ENCODE measurements at regions of chr6 and their contacts with region 1.

Region 1: GRCh38 chr6:106979427-106979884 is 4.9 kb upstream of the CD24 start:
- DNase-seq: peak; percentile 80 to 89
- H3K4me3 ChIP-seq: no peak overlapping the region
- H3K4me3 Mint-ChIP-seq: no peak overlapping the region
- H3K27ac Mint-ChIP-seq: no peak overlapping the region
- H3K4me1 ChIP-seq: peaks cover 11% of the 10 kb centered on the region; the same call in 1 of the 2 replicates
- H3K4me1 Mint-ChIP-seq: no peaks in the 10 kb centered on the region
- H3K27me3 ChIP-seq: no peaks in the 10 kb centered on the region
- H3K27me3 Mint-ChIP-seq: no peaks in the 10 kb centered on the region
- CTCF ChIP-seq: peak; percentile 95 to 98

Region 2: GRCh38 chr6:106444777-106445507 is 534.5 kb before region 1 on chr6:
- CTCF ChIA-PET with region 1: interaction called, 3 read pairs
- POLR2A ChIA-PET with region 1: no interaction called
- intact Hi-C with region 1: loop called (anchors 1 kb)
- DNase-seq: peak in 1 of 2 experiments; percentile 65
- H3K4me3 ChIP-seq: no peak overlapping the region
- H3K4me3 Mint-ChIP-seq: no peak overlapping the region
- H3K27ac Mint-ChIP-seq: no peak overlapping the region
- H3K4me1 ChIP-seq: peaks cover 8% of the 10 kb centered on the region
- H3K4me1 Mint-ChIP-seq: peaks cover 6% of the 10 kb centered on the region
- H3K27me3 ChIP-seq: no peaks in the 10 kb centered on the region; the same call in none of the 2 replicates
- H3K27me3 Mint-ChIP-seq: peaks cover 14% of the 10 kb centered on the region
- CTCF ChIP-seq: peak; percentile 64 to 65

Region 3: DNA sequence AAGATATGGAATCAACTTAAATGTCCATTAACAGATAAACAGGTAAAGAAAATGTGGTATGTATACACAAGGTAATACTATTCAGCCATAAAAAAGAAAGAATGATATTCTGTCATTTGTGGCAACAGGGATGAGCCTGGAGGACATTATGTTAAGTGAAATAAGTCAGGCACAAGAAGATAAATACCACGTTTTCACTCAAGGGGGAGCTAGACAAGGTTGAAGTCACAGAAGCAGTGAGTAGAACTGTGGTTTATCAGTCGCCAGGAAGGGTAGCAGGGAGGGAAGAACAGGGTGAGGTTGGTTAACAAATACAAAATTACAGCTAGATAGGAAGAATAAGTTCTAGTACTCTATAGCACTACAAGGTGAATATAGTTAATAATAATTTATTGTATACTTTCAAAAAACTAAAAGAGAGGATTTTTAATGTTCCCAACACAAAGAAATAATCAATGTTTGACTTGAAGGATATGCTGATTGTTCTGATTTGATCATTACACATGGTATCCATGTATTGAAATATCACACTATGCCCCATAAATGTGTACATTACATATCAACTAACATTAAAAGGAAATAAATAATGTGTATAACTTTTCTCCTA is 371.3 kb before region 1 on chr6:
- CTCF ChIA-PET with region 1: interaction called, 20 read pairs
- POLR2A ChIA-PET with region 1: no interaction called
- intact Hi-C with region 1: loop called (anchors 1 kb)
- DNase-seq: peak in 1 of 2 experiments; percentile 67
- H3K4me3 ChIP-seq: no peak overlapping the region
- H3K4me3 Mint-ChIP-seq: no peak overlapping the region
- H3K27ac Mint-ChIP-seq: no peak overlapping the region
- H3K4me1 ChIP-seq: no peaks in the 10 kb centered on the region
- H3K4me1 Mint-ChIP-seq: no peaks in the 10 kb centered on the region
- H3K27me3 ChIP-seq: no peaks in the 10 kb centered on the region
- H3K27me3 Mint-ChIP-seq: no peaks in the 10 kb centered on the region
- CTCF ChIP-seq: peak; percentile 54 to 56

Region 4: DNA sequence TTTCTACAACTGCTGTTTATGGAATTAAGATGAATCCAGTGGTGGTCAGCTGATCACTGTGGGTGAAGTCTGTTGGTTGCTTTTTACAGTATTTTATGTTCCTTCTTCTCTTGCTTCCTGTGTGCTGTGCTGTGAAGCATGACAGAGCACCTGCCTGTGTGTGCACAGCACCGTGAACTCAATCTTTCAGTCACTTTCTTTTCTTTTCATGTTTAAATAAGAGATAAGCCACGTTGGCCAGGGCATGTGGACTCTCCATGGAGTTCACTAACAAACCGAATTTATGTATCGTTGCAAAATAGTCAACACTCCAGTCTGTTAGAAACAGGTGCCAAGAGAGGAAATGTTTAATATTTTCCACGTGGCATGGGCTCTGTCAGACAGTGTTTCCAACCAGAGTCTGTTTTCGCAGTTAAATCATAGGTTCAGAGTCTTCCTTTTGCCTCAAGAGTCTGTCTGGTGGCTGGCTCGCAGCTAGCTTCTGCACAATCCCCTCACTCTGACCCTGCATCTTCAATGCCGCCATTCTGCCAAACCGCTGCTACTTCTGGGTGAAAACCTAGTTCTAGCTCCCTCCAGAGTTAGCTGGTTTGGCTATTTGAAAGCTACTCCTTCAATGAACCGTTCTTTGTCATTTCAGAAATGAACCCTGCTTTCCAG is 276.9 kb before region 1 on chr6:
- CTCF ChIA-PET with region 1: no interaction called
- POLR2A ChIA-PET with region 1: no interaction called
- intact Hi-C with region 1: loop called (anchors 5 kb)
- DNase-seq: peak; percentile 35 to 38
- H3K4me3 ChIP-seq: peak overlapping the region; percentile 8
- H3K4me3 Mint-ChIP-seq: peak overlapping the region; percentile 52
- H3K27ac Mint-ChIP-seq: no peak overlapping the region
- H3K4me1 ChIP-seq: peaks cover 15% of the 10 kb centered on the region
- H3K4me1 Mint-ChIP-seq: peaks cover 16% of the 10 kb centered on the region
- H3K27me3 ChIP-seq: no peaks in the 10 kb centered on the region
- H3K27me3 Mint-ChIP-seq: no peaks in the 10 kb centered on the region
- CTCF ChIP-seq: no peak

Region 5: GRCh38 chr6:106883808-106884262 is 95.6 kb before region 1 on chr6:
- CTCF ChIA-PET with region 1: interaction called, 5 read pairs
- POLR2A ChIA-PET with region 1: no interaction called
- intact Hi-C with region 1: loop called (anchors 1 kb)
- DNase-seq: no peak
- H3K4me3 ChIP-seq: no peak overlapping the region
- H3K4me3 Mint-ChIP-seq: no peak overlapping the region
- H3K27ac Mint-ChIP-seq: no peak overlapping the region
- H3K4me1 ChIP-seq: peaks cover 35% of the 10 kb centered on the region
- H3K4me1 Mint-ChIP-seq: peaks cover 31% of the 10 kb centered on the region
- H3K27me3 ChIP-seq: no peaks in the 10 kb centered on the region
- H3K27me3 Mint-ChIP-seq: no peaks in the 10 kb centered on the region
- CTCF ChIP-seq: peak; percentile 18